Adrenal gland (tissue), 19 donors: ENCODE measurements at regions of chr1 and their contacts with region 1.

Region 1: GRCh38 chr1:19485362-19486187 is at the start of gene CAPZB:
- DNase-seq: peak; percentile 90 to 97 (median 96)
- H3K4me3 ChIP-seq: peak within 1 kb of the TSS; percentile 30 to 98 (median 86)
- H3K27ac ChIP-seq: peak within 1 kb of the TSS; percentile 67 to 100 (median 95)
- H3K4me1 ChIP-seq: peaks cover 17 to 58% of the 10 kb centered on the region in 2 donors
- H3K27me3 ChIP-seq: no peaks in the 10 kb centered on the region
- CTCF ChIP-seq: peak in 1 of 6 experiments; percentile 18
- POLR2A ChIP-seq: peak; percentile 76 to 86
- total RNA-seq, gene CAPZB: 99.7 to 386 (median 154) TPM

Region 2: DNA sequence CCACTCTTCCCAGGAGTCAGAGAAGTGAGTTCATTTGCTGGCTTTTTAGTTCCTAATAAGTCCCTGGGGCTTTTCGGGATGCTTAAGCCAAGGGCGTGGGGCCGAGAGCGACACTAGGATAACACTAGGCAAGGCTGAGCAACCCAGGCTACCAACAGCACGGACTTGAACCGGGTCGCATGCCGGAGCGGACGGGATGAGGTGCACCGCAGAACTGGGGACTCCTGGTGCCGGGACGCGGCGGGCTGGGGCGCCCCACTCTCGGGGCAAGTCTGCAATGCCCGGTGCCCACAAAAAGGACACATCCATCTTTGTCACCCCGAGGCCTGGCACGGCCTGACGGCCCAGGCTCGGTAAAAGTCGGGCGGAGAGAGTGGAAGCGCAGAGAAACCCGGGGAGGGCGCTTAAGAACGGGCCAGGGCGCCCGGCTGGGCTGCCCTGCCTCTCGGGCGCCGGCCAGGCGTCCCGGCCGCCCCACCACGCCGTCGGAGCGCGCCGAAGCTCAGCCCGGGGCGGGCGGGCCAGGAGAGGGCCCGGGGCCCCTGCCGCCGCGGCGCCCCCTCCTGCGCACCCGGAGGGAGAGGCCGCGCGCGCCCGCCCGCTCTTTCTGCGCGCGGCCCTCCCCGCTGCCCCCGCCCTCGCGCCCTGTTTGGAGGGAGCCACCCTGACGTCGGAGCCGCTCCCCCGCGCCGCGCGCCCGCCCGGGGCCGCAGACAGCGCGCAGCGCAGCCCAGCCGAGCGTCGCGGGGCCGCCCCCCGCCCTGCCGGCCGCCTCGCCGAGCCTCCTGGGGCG is 158.2 kb after region 1 on chr1 and contains the start of gene NBL1:
- intact Hi-C with region 1: loop called in 1 of 2 experiments (anchors 10 kb)
- DNase-seq: peak in 2 of 7 donors; percentile 45 to 56
- H3K4me3 ChIP-seq: peak within 1 kb of the TSS in 2 of 4 donors; percentile 40 to 82
- H3K27ac ChIP-seq: peak within 1 kb of the TSS in 4 of 5 donors; percentile 19 to 87 (median 48)
- H3K4me1 ChIP-seq: peaks cover 5 to 7% of the 10 kb centered on the region in 2 donors
- H3K27me3 ChIP-seq: no peaks in the 10 kb centered on the region
- CTCF ChIP-seq: no peak
- POLR2A ChIP-seq: no peak
- total RNA-seq, gene NBL1: 4.2 to 61.0 (median 22.6) TPM